Activated naive CD4-positive, alpha-beta T cell treated with anti-CD3 and anti-CD28 coated beads for 36 hours (primary cell): ENCODE measurements at regions of chr9 and their contacts with region 1.

Region 1: GRCh38 chr9:97237951-97238851 is 69.3 kb upstream of the CCDC180 start:
- DNase-seq: peak; percentile 88
- H3K4me3 Mint-ChIP-seq: peak overlapping the region; percentile 88
- H3K27ac Mint-ChIP-seq: peak overlapping the region; percentile 81
- H3K4me1 Mint-ChIP-seq: peaks cover 14% of the 10 kb centered on the region
- H3K27me3 Mint-ChIP-seq: no peaks in the 10 kb centered on the region

Region 2: GRCh38 chr9:96777426-96777864 is 460.8 kb before region 1 on chr9:
- CTCF ChIA-PET with region 1: no interaction called
- intact Hi-C with region 1: loop called (anchors 2 kb)
- DNase-seq: no peak
- H3K4me3 Mint-ChIP-seq: peak overlapping the region; percentile 100
- H3K27ac Mint-ChIP-seq: peak overlapping the region; percentile 96
- H3K4me1 Mint-ChIP-seq: peaks cover 32% of the 10 kb centered on the region
- H3K27me3 Mint-ChIP-seq: no peaks in the 10 kb centered on the region

Region 3: GRCh38 chr9:97188545-97188944 is 49.7 kb before region 1 on chr9:
- CTCF ChIA-PET with region 1: no interaction called
- intact Hi-C with region 1: no loop called
- DNase-seq: no peak
- H3K4me3 Mint-ChIP-seq: no peak overlapping the region
- H3K27ac Mint-ChIP-seq: no peak overlapping the region
- H3K4me1 Mint-ChIP-seq: no peaks in the 10 kb centered on the region
- H3K27me3 Mint-ChIP-seq: no peaks in the 10 kb centered on the region

Region 4: DNA sequence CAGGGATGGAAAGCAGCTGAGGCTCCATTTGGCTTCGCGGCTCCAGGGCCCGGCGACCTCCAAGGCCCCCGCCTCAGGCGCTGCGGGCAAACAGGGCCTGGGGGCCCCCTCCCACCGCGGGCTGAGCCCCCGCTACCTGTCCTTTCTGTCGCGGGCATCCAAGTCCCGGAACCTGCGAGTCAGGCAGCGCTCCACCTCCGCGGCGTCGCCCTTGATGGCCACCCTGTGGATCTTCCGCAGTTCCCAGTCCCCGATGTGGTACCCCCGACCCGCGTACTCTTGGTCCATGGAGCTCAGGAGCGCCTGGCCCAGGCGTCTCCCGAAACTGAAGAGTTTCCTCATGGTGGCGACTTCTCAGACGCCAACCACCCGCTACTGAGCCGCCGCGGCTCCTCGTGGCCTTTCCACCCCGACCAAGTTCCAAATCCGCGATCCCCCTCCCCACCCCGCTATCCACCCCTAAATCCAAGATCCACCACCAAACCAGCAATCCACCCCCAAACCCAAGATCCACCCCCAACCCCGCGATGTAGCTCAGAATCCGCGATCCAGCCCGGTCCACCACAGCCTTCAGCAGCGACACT is 17.2 kb before region 1 on chr9:
- CTCF ChIA-PET with region 1: interaction called, 3 read pairs
- intact Hi-C with region 1: loop called (anchors 1 kb)
- DNase-seq: no peak
- H3K4me3 Mint-ChIP-seq: peak overlapping the region; percentile 77
- H3K27ac Mint-ChIP-seq: no peak overlapping the region
- H3K4me1 Mint-ChIP-seq: peaks cover 5% of the 10 kb centered on the region
- H3K27me3 Mint-ChIP-seq: peaks cover 43% of the 10 kb centered on the region

Region 5: DNA sequence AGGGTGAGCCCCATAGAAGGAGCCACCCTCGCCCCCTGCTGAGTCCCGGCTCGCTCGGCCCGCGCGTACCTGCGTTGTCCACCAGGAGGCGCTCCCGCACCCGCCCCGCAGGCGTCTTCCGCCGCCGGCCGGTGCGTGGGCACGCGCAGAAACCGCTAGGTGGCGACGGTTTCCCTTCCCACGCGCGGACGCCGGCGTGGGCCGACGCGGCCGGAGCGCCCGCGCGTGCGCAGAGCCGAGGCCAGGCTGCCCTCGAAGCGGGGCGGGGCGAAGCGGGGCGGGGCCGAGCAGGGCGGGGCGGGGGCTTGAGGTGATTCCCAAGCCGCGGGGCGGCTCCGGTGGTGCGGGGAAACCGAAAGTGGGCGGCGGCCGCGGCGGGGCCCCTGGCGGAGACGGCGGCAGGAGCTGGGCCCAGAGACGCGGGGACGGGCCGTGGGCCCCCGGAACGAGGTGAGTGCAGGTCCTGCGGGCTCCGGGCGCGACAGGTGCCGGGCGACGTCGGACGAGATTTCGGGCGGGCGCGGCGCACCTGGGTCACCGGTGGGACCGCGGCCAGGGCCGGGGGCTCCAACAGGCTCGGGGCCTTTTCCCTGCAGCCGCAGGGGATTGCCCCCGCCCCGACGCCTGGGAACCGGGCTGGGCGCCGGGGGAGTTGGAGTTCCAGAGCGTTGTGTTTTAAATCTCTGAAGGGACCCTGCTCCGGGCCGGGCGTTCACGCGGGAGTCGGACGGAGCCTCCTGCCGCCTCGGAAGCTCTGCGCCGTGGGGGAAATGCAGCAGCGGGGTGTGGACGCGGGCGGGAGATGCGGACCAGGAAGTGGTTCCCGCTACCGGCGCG is 173.8 kb after region 1 on chr9 and contains the start of gene TDRD7:
- CTCF ChIA-PET with region 1: no interaction called
- intact Hi-C with region 1: loop called (anchors 5 kb)
- DNase-seq: peak; percentile 85
- H3K4me3 Mint-ChIP-seq: peak within 1 kb of the TSS; percentile 79
- H3K27ac Mint-ChIP-seq: peak within 1 kb of the TSS; percentile 44
- H3K4me1 Mint-ChIP-seq: peaks cover 13% of the 10 kb centered on the region
- H3K27me3 Mint-ChIP-seq: peaks cover 9% of the 10 kb centered on the region
- total RNA-seq, gene TDRD7: 6.9 to 7.4 TPM